OCI-LY7 (cell line): ENCODE measurements at regions of chr3 and their contacts with region 1.

Region 1: DNA sequence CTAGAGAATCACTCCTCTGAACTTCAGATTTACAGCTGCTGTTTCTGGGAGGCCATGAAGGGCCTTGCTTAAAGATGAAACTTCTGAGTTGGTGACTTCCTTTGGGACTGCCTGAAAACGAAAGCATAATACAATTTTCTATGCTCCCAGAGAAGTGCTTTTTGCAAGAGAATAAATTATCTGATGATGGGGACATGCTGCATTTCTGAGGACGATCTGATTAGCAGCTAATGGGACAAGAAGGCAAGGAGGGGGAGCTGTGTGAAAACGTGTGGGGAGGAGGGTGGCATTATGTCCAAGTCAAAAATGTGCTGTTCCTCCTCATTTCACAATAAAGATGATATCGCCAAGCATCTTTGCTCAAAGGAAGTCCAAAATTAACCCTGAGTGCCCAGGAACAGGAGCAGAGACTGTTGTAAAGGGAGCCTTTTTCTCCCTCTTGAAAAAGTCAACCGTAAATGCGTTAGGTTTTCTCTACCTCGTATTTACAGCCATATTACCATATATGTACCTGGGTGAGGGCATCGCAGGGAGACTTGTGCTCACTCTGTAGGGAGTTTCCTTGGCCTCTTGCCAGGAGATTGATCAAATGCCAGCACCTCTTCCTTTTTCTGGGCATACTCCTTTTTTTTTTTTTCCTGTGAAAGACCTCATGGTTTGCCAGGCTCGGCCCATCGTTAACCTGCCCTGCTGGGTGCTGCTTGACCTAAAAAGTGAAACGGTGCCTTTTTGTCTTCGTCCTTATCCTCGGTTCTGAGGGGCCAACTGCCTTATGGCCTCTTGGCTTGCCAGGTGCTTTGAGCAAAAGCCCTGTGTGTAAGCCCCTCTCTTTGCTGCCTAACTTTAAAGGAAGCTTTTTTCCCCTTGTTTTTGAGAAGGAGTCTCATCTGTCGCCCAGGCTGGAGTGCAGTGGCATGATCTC is 11.5 kb downstream of the ITPR1 start:
- DNase-seq: peak; percentile 59
- H3K4me3 ChIP-seq: peak overlapping the region; percentile 64
- H3K27ac ChIP-seq: peak overlapping the region; percentile 98
- H3K4me1 ChIP-seq: peaks cover 83% of the 10 kb centered on the region
- CTCF ChIP-seq: no peak

Region 2: GRCh38 chr3:4524088-4525023 is 19.8 kb after region 1 on chr3:
- CTCF ChIA-PET with region 1: interaction called, 3 read pairs
- POLR2A ChIA-PET with region 1: interaction called, 11 read pairs
- intact Hi-C with region 1: no loop called
- DNase-seq: no peak
- H3K4me3 ChIP-seq: no peak overlapping the region
- H3K27ac ChIP-seq: no peak overlapping the region
- H3K4me1 ChIP-seq: peaks cover 12% of the 10 kb centered on the region
- CTCF ChIP-seq: no peak

Region 3: GRCh38 chr3:4577721-4578120 is 73.1 kb after region 1 on chr3:
- CTCF ChIA-PET with region 1: no interaction called
- POLR2A ChIA-PET with region 1: interaction called, 10 read pairs
- intact Hi-C with region 1: no loop called
- DNase-seq: no peak
- H3K4me3 ChIP-seq: no peak overlapping the region
- H3K27ac ChIP-seq: no peak overlapping the region
- H3K4me1 ChIP-seq: no peaks in the 10 kb centered on the region
- CTCF ChIP-seq: no peak